ENCODE measurements at regions of chr1 and their contacts with region 1.

Region 1: GRCh38 chr1:168634951-168635528 is 58.6 kb downstream of the XCL1 start:
- DNase-seq: no peak

Region 2: GRCh38 chr1:169003864-169004516 is 368.9 kb after region 1 on chr1:
- intact Hi-C with region 1: loop called in 1 of 2 experiments (anchors 2 kb)
- DNase-seq: peak; percentile 80